Panc1 (cell line): ENCODE measurements at regions of chr1 and their contacts with region 1.

Region 1: GRCh38 chr1:16478091-16478490 is 36.0 kb downstream of the RNU1-1 start:
- DNase-seq: no peak
- ATAC-seq: no peak
- H3K4me3 ChIP-seq: no peak overlapping the region
- H3K27ac ChIP-seq: no peak overlapping the region
- H3K4me1 ChIP-seq: no peaks in the 10 kb centered on the region
- H3K27me3 ChIP-seq: no peaks in the 10 kb centered on the region
- CTCF ChIP-seq: no peak

Region 2: GRCh38 chr1:16409536-16410152 is 68.4 kb before region 1 on chr1:
- CTCF ChIA-PET with region 1: no interaction called
- POLR2A ChIA-PET with region 1: no interaction called
- in situ Hi-C with region 1: no loop called
- intact Hi-C with region 1: no loop called
- DNase-seq: no peak
- ATAC-seq: peak; percentile 29; the same call in 1 of the 2 replicates
- H3K4me3 ChIP-seq: no peak overlapping the region
- H3K27ac ChIP-seq: no peak overlapping the region
- H3K4me1 ChIP-seq: no peaks in the 10 kb centered on the region
- H3K27me3 ChIP-seq: no peaks in the 10 kb centered on the region
- CTCF ChIP-seq: no peak

Region 3: DNA sequence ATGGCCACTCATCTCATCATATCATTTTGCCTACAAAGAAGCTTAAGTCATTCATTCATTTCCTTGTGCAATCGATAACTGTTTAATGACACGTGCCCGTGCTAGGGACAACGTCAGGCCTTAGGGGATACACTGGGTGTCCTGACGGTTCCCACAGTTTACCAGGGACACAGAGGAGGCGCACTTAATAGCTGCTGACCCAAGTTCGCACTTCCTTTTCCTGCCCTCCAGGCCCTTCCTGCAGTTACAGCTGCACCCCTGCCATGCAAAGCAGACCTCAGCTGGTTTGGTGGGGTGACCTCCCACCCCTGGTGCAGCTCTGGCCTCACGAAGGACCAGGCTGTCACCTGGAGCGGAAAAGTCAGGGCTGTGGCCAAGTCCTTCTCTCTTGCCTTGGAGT is 45.1 kb before region 1 on chr1:
- CTCF ChIA-PET with region 1: no interaction called
- POLR2A ChIA-PET with region 1: interaction called, 13 read pairs
- in situ Hi-C with region 1: no loop called
- intact Hi-C with region 1: no loop called
- DNase-seq: no peak
- ATAC-seq: no peak
- H3K4me3 ChIP-seq: no peak overlapping the region
- H3K27ac ChIP-seq: no peak overlapping the region
- H3K4me1 ChIP-seq: no peaks in the 10 kb centered on the region
- H3K27me3 ChIP-seq: no peaks in the 10 kb centered on the region
- CTCF ChIP-seq: no peak